A673 (cell line): ENCODE measurements at regions of chr9 and their contacts with region 1.

Region 1: GRCh38 chr9:108565651-108566378 is 290.0 kb downstream of the ACTL7B start:
- DNase-seq: peak; percentile 90
- H3K4me3 ChIP-seq: no peak overlapping the region
- H3K27ac ChIP-seq: no peak overlapping the region
- H3K4me1 ChIP-seq: no peaks in the 10 kb centered on the region
- H3K27me3 ChIP-seq: no peaks in the 10 kb centered on the region
- CTCF ChIP-seq: peak; percentile 90

Region 2: DNA sequence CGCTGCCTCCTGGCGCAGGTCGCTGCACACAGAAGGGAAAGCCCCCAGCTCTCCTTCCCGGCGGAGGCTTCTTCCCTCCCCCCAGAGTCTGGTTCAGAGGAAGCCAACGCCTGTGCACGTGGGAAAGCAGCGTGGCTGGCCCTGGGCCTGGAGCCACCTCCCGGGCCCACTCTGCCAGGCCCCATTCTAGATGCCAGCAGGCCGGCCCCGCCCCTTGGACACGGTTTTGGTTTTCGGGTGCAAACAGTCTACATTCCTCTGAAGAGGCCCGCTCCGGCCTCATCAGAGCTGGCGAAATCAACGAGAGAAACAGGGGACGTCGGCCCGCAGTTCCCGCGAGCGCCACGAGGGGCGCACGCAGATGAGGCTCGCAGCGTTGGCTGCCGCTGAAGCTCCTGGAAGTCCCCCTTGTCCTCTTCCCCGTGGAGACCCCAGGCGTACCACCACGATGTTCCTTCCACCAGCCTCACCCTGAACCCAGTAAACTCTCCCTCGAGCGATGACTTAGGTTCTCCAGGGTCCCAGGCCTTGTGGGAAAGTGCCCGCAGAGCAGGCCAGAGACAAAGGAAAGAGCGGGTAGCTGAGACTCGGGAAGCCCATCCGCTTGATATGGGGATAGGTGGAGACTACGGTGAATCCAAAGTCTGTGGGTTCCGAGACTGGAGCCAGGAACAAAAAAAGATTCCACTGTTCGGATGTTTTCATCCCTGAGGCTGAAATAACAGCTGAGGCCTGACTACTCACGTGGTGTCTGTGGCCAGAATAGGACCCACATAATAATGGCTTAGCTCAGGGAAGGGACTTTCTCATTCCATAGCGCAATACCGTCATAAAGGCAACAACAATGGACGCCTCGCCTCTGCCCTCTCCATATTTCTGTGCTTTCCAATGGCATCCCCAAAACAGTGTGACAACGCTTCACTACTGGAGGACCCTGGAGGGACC is 1140.4 kb before region 1 on chr9:
- CTCF ChIA-PET with region 1: interaction called, 5 read pairs
- POLR2A ChIA-PET with region 1: no interaction called
- intact Hi-C with region 1: loop called (anchors 1 kb)
- DNase-seq: peak; percentile 73
- H3K4me3 ChIP-seq: no peak overlapping the region
- H3K27ac ChIP-seq: no peak overlapping the region
- H3K4me1 ChIP-seq: no peaks in the 10 kb centered on the region
- H3K27me3 ChIP-seq: no peaks in the 10 kb centered on the region
- CTCF ChIP-seq: peak; percentile 96

Region 3: GRCh38 chr9:107465467-107466451 is 1100.1 kb before region 1 on chr9:
- CTCF ChIA-PET with region 1: no interaction called
- POLR2A ChIA-PET with region 1: no interaction called
- intact Hi-C with region 1: loop called (anchors 5 kb)
- DNase-seq: peak; percentile 61
- H3K4me3 ChIP-seq: peak overlapping the region; percentile 29
- H3K27ac ChIP-seq: no peak overlapping the region
- H3K4me1 ChIP-seq: peaks cover 3% of the 10 kb centered on the region
- H3K27me3 ChIP-seq: peaks cover 33% of the 10 kb centered on the region
- CTCF ChIP-seq: peak; percentile 69

Region 4: GRCh38 chr9:107484117-107484723 is 1081.6 kb before region 1 on chr9:
- CTCF ChIA-PET with region 1: no interaction called
- POLR2A ChIA-PET with region 1: no interaction called
- intact Hi-C with region 1: loop called (anchors 5 kb)
- DNase-seq: peak; percentile 67
- H3K4me3 ChIP-seq: no peak overlapping the region
- H3K27ac ChIP-seq: no peak overlapping the region
- H3K4me1 ChIP-seq: peaks cover 13% of the 10 kb centered on the region
- H3K27me3 ChIP-seq: peaks cover 29% of the 10 kb centered on the region
- CTCF ChIP-seq: peak; percentile 59

Region 5: DNA sequence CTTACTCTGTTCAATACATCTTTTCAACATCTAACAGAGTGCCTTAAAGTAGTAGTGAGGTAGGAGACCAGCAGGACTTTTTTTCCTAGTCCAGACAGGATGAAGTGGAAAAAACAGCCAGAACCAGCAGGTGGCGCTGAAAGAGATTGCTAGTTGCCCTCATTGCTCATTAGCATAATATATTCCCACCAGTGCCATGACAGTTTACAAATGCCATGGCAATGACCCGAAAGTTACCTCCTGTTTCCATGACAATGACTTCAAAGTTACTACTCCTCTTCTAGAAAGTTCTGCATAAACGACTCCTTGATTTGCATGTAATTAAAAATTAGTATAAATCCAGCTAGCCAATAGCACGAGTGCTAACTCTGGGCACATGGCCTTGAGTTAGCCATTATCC is 97.4 kb before region 1 on chr9:
- CTCF ChIA-PET with region 1: interaction called, 3 read pairs
- POLR2A ChIA-PET with region 1: no interaction called
- intact Hi-C with region 1: loop called (anchors 1 kb)
- DNase-seq: peak; percentile 75
- H3K4me3 ChIP-seq: no peak overlapping the region
- H3K27ac ChIP-seq: no peak overlapping the region
- H3K4me1 ChIP-seq: no peaks in the 10 kb centered on the region
- H3K27me3 ChIP-seq: no peaks in the 10 kb centered on the region
- CTCF ChIP-seq: peak; percentile 75

Region 6: GRCh38 chr9:108579757-108580439 is 14.1 kb after region 1 on chr9:
- CTCF ChIA-PET with region 1: no interaction called
- POLR2A ChIA-PET with region 1: no interaction called
- intact Hi-C with region 1: no loop called
- DNase-seq: peak; percentile 82
- H3K4me3 ChIP-seq: no peak overlapping the region
- H3K27ac ChIP-seq: no peak overlapping the region
- H3K4me1 ChIP-seq: peaks cover 11% of the 10 kb centered on the region
- H3K27me3 ChIP-seq: no peaks in the 10 kb centered on the region
- CTCF ChIP-seq: no peak